CD4-positive, alpha-beta memory T cell (primary cell): ENCODE measurements at regions of chr6 and their contacts with region 1.

Region 1: DNA sequence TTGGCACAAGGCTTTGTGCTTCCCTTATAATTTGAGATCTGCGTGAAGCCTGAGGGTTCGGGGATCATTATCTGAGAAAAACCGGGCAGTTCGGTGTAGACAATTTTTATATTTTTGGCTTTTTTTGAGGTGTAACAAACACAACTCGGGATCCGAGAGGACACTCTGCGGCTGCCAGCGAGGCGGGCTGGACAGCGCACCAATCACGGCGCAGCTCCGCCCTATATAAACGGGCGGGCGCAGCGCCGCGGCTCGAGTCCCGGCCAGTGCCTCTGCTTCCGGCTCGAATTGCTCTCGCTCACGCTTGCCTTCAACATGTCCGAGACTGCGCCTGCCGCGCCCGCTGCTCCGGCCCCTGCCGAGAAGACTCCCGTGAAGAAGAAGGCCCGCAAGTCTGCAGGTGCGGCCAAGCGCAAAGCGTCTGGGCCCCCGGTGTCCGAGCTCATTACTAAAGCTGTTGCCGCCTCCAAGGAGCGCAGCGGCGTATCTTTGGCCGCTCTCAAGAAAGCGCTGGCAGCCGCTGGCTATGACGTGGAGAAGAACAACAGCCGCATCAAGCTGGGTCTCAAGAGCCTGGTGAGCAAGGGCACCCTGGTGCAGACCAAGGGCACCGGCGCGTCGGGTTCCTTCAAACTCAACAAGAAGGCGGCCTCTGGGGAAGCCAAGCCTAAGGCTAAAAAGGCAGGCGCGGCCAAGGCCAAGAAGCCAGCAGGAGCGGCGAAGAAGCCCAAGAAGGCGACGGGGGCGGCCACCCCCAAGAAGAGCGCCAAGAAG is 69.0 kb downstream of the HFE start:
- DNase-seq: peak; percentile 80 to 89 (median 88)
- H3K4me3 ChIP-seq: peak overlapping the region; percentile 53 to 64
- H3K4me3 Mint-ChIP-seq: peak overlapping the region; percentile 88 to 99 (median 96)
- H3K27ac ChIP-seq: peak overlapping the region; percentile 79
- H3K27ac Mint-ChIP-seq: peak overlapping the region; percentile 91 to 98 (median 95)
- H3K4me1 ChIP-seq: peaks cover 26% of the 10 kb centered on the region
- H3K4me1 Mint-ChIP-seq: peaks cover 16 to 58% (median 26%) of the 10 kb centered on the region in 4 donors
- H3K27me3 ChIP-seq: no peaks in the 10 kb centered on the region
- H3K27me3 Mint-ChIP-seq: no peaks in the 10 kb centered on the region

Region 2: GRCh38 chr6:26025894-26026832 is 130.1 kb before region 1 on chr6:
- CTCF ChIA-PET with region 1: interaction called, 4 read pairs
- POLR2A ChIA-PET with region 1: interaction called, 348 read pairs
- intact Hi-C with region 1: loop called (anchors 1 kb)
- DNase-seq: peak; percentile 90 to 98 (median 94)
- H3K4me3 ChIP-seq: peak overlapping the region; percentile 67 to 74
- H3K4me3 Mint-ChIP-seq: peak overlapping the region; percentile 85 to 98 (median 92)
- H3K27ac ChIP-seq: peak overlapping the region; percentile 89
- H3K27ac Mint-ChIP-seq: peak overlapping the region; percentile 96 to 100 (median 99)
- H3K4me1 ChIP-seq: peaks cover 29% of the 10 kb centered on the region
- H3K4me1 Mint-ChIP-seq: peaks cover 22 to 60% (median 39%) of the 10 kb centered on the region in 4 donors
- H3K27me3 ChIP-seq: no peaks in the 10 kb centered on the region
- H3K27me3 Mint-ChIP-seq: peaks cover 0 to 4% of the 10 kb centered on the region in 2 donors

Region 3: GRCh38 chr6:26122793-26123674 is 33.2 kb before region 1 on chr6:
- CTCF ChIA-PET with region 1: interaction called, 59 read pairs
- POLR2A ChIA-PET with region 1: interaction called, 2,775 read pairs
- intact Hi-C with region 1: loop called (anchors 1 kb)
- DNase-seq: peak; percentile 94 to 98 (median 98)
- H3K4me3 ChIP-seq: peak overlapping the region; percentile 87 to 98
- H3K4me3 Mint-ChIP-seq: peak overlapping the region; percentile 96 to 100 (median 100)
- H3K27ac ChIP-seq: peak overlapping the region; percentile 89
- H3K27ac Mint-ChIP-seq: peak overlapping the region; percentile 97 to 99 (median 99)
- H3K4me1 ChIP-seq: peaks cover 26% of the 10 kb centered on the region
- H3K4me1 Mint-ChIP-seq: peaks cover 20 to 54% (median 30%) of the 10 kb centered on the region in 4 donors
- H3K27me3 ChIP-seq: no peaks in the 10 kb centered on the region
- H3K27me3 Mint-ChIP-seq: peaks cover 0 to 3% of the 10 kb centered on the region in 2 donors

Region 4: DNA sequence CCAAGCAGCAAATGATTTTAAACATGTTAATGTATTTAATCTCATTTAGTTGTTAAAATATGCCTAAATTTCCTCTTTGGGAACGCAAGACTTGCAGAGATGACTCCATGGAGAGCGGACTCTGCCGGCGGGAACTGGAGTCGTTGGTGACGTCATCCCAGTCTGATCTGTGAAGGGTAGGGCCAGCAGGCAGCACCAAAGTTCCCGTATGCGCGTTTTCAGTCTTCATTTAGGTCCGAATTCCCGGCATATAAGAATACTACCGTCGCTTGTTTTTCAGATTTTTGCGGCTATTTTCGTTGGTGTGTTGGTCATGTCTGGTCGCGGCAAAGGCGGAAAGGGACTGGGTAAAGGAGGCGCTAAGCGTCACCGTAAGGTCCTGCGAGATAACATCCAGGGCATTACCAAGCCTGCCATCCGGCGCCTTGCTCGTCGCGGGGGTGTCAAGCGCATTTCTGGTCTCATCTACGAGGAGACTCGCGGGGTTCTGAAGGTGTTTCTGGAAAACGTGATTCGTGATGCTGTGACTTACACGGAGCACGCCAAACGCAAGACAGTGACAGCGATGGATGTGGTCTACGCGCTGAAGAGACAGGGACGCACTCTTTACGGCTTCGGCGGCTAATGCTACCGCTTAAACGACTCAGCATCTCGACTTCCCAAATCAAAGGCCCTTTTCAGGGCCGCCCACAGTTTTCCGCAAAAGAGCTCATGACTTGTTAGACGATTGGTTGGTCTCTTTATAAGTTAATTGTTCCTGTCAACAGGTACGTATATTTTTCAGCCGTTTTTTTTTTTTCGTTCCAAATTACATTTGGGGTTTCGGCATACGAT is 48.3 kb after region 1 on chr6:
- CTCF ChIA-PET with region 1: interaction called, 47 read pairs
- POLR2A ChIA-PET with region 1: interaction called, 2,476 read pairs
- intact Hi-C with region 1: loop called (anchors 1 kb)
- DNase-seq: peak; percentile 85 to 95 (median 89)
- H3K4me3 ChIP-seq: peak overlapping the region; percentile 48 to 87
- H3K4me3 Mint-ChIP-seq: no peak overlapping the region
- H3K27ac ChIP-seq: peak overlapping the region; percentile 82
- H3K27ac Mint-ChIP-seq: no peak overlapping the region
- H3K4me1 ChIP-seq: peaks cover 39% of the 10 kb centered on the region
- H3K4me1 Mint-ChIP-seq: peaks cover 8 to 26% (median 13%) of the 10 kb centered on the region in 4 donors
- H3K27me3 ChIP-seq: no peaks in the 10 kb centered on the region
- H3K27me3 Mint-ChIP-seq: peaks cover 0 to 3% of the 10 kb centered on the region in 2 donors

Region 5: GRCh38 chr6:26270903-26271667 is 114.8 kb after region 1 on chr6:
- CTCF ChIA-PET with region 1: no interaction called
- POLR2A ChIA-PET with region 1: interaction called, 259 read pairs
- intact Hi-C with region 1: loop called (anchors 1 kb)
- DNase-seq: peak; percentile 84 to 87 (median 85)
- H3K4me3 ChIP-seq: peak overlapping the region; percentile 53 to 65
- H3K4me3 Mint-ChIP-seq: peak overlapping the region in 1 of 8 donors; percentile 85
- H3K27ac ChIP-seq: peak overlapping the region; percentile 83
- H3K27ac Mint-ChIP-seq: peak overlapping the region in 5 of 7 donors; percentile 68 to 97 (median 82)
- H3K4me1 ChIP-seq: peaks cover 31% of the 10 kb centered on the region
- H3K4me1 Mint-ChIP-seq: peaks cover 0 to 22% (median 15%) of the 10 kb centered on the region in 4 donors
- H3K27me3 ChIP-seq: no peaks in the 10 kb centered on the region
- H3K27me3 Mint-ChIP-seq: no peaks in the 10 kb centered on the region

Region 6: GRCh38 chr6:26351544-26351953 is 195.3 kb after region 1 on chr6:
- CTCF ChIA-PET with region 1: no interaction called
- POLR2A ChIA-PET with region 1: no interaction called
- intact Hi-C with region 1: no loop called
- DNase-seq: no peak
- H3K4me3 ChIP-seq: no peak overlapping the region
- H3K4me3 Mint-ChIP-seq: no peak overlapping the region
- H3K27ac ChIP-seq: no peak overlapping the region
- H3K27ac Mint-ChIP-seq: no peak overlapping the region
- H3K4me1 ChIP-seq: no peaks in the 10 kb centered on the region
- H3K4me1 Mint-ChIP-seq: peaks cover 0 to 7% (median 0%) of the 10 kb centered on the region in 4 donors
- H3K27me3 ChIP-seq: no peaks in the 10 kb centered on the region
- H3K27me3 Mint-ChIP-seq: no peaks in the 10 kb centered on the region

Region 7: GRCh38 chr6:27146706-27147505 is 990.6 kb after region 1 on chr6:
- CTCF ChIA-PET with region 1: no interaction called
- POLR2A ChIA-PET with region 1: interaction called, 99 read pairs
- intact Hi-C with region 1: no loop called
- DNase-seq: peak; percentile 85 to 96 (median 94)
- H3K4me3 ChIP-seq: peak overlapping the region; percentile 76 to 77
- H3K4me3 Mint-ChIP-seq: no peak overlapping the region
- H3K27ac ChIP-seq: peak overlapping the region; percentile 97
- H3K27ac Mint-ChIP-seq: no peak overlapping the region
- H3K4me1 ChIP-seq: peaks cover 22% of the 10 kb centered on the region
- H3K4me1 Mint-ChIP-seq: peaks cover 10 to 20% (median 13%) of the 10 kb centered on the region in 4 donors
- H3K27me3 ChIP-seq: no peaks in the 10 kb centered on the region
- H3K27me3 Mint-ChIP-seq: no peaks in the 10 kb centered on the region